HCT116 (cell line): ENCODE measurements at regions of chr12 and their contacts with region 1.

Region 1: GRCh38 chr12:38906482-38907170 is 1.2 kb upstream of the CPNE8 start:
- DNase-seq: peak; percentile 74
- ATAC-seq: peak; percentile 73
- H3K4me3 ChIP-seq: peak overlapping the region; percentile 80 to 83
- H3K27ac ChIP-seq: peak overlapping the region; percentile 95
- H3K4me1 ChIP-seq: peaks cover 7 to 27% of the 10 kb centered on the region in 2 experiments
- H3K27me3 ChIP-seq: no peaks in the 10 kb centered on the region
- CTCF ChIP-seq: peak; percentile 61 to 94 (median 82)
- POLR2A ChIP-seq: no peak
- RAD21 ChIP-seq: peak; percentile 72

Region 2: GRCh38 chr12:38332814-38333213 is 573.8 kb before region 1 on chr12:
- CTCF ChIA-PET with region 1: no interaction called
- POLR2A ChIA-PET with region 1: no interaction called
- RAD21 ChIA-PET with region 1: no interaction called
- intact Hi-C with region 1: loop called (anchors 2 kb)
- DNase-seq: no peak
- ATAC-seq: no peak
- H3K4me3 ChIP-seq: no peak overlapping the region
- H3K27ac ChIP-seq: no peak overlapping the region
- H3K4me1 ChIP-seq: no peaks in the 10 kb centered on the region
- H3K27me3 ChIP-seq: no peaks in the 10 kb centered on the region
- CTCF ChIP-seq: no peak
- POLR2A ChIP-seq: no peak
- RAD21 ChIP-seq: no peak

Region 3: DNA sequence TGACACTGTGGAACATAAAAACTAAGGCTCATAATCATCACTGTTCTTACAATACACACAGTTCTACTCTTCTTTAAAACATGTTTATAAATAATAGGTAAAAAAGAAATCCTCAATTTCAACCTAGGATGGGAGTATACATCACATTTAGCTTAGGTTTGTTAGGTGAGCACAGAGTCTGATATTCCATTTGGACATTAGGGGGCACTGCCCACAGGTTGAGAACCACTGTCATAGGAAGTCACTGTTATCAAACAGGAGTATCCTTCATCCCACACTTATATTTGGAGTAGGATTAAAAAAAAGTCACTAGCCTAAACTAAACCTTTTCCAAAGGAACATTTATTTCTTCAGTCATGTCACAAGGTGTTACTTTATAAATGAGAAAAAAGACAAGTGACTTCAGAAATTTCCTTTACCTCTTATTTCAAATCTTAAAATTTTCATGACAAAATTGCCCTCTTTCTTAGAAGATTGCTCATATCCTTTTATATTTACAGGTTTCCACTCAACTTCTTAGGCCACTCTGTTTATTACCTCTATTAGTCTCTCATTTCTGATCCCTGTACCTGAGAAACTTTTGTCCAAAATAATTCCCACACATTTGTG is 241.9 kb before region 1 on chr12:
- CTCF ChIA-PET with region 1: interaction called, 7 read pairs
- POLR2A ChIA-PET with region 1: no interaction called
- RAD21 ChIA-PET with region 1: no interaction called
- intact Hi-C with region 1: loop called (anchors 5 kb)
- DNase-seq: peak; percentile 15
- ATAC-seq: peak; percentile 88
- H3K4me3 ChIP-seq: no peak overlapping the region
- H3K27ac ChIP-seq: no peak overlapping the region
- H3K4me1 ChIP-seq: no peaks in the 10 kb centered on the region
- H3K27me3 ChIP-seq: no peaks in the 10 kb centered on the region
- CTCF ChIP-seq: peak; percentile 25 to 75 (median 73); a peak in 5 of 6 replicates
- POLR2A ChIP-seq: no peak
- RAD21 ChIP-seq: peak; percentile 56

Region 4: DNA sequence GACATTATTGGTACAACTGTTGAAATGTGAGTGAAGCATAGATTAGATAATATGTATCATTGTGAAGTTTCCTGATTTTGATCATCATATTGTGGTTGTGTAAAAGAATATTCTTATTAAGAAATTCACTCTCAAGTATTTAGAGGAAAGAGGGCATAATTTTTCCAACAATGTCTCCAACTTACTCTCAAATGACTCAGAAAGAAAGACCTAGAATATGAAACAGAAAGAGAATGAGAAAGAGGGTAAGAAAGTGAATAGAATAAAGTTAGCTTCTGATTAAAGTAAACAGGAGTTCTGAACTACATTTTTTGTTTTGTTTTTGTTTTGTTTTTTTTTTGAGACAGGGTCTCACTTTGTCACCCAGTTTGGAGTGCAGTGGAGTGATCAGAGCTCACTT is 124.3 kb before region 1 on chr12:
- CTCF ChIA-PET with region 1: no interaction called
- POLR2A ChIA-PET with region 1: no interaction called
- RAD21 ChIA-PET with region 1: no interaction called
- intact Hi-C with region 1: no loop called
- DNase-seq: no peak
- ATAC-seq: no peak
- H3K4me3 ChIP-seq: no peak overlapping the region
- H3K27ac ChIP-seq: no peak overlapping the region
- H3K4me1 ChIP-seq: no peaks in the 10 kb centered on the region
- H3K27me3 ChIP-seq: no peaks in the 10 kb centered on the region
- CTCF ChIP-seq: no peak
- POLR2A ChIP-seq: no peak
- RAD21 ChIP-seq: no peak

Region 5: DNA sequence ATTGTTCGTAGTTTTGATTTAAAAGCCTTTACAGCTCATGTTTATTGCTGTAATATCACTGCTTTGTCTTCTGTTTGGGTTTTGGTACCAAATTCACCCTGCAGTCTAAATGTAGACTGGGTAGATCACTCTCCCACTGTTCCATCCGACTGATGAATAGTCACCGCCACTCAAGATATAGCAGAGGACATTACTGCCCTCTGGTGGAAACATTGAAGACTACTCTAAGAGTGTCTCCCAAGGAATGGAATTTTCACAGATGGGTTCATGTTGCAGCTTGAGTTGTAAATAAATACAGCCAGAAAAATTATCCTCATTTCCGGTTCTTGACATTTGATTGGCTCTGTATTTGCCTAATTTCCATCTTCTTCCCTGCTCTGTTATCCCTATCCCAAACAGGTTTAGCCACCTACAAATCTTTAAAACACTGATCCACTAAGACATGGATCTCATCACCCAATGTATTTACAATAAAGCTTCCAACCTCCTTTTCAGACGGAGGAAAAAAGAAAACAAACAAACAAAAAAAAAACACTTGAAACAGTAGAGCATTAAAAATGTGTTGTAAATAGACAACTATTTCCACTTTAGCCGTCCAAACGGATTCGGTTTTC is 197.0 kb after region 1 on chr12:
- CTCF ChIA-PET with region 1: interaction called, 27 read pairs
- POLR2A ChIA-PET with region 1: no interaction called
- RAD21 ChIA-PET with region 1: interaction called in 1 of 2 experiments, 6 read pairs
- intact Hi-C with region 1: loop called (anchors 5 kb)
- DNase-seq: peak; percentile 70
- ATAC-seq: peak; percentile 98
- H3K4me3 ChIP-seq: no peak overlapping the region
- H3K27ac ChIP-seq: no peak overlapping the region
- H3K4me1 ChIP-seq: no peaks in the 10 kb centered on the region
- H3K27me3 ChIP-seq: no peaks in the 10 kb centered on the region
- CTCF ChIP-seq: peak; percentile 67 to 85 (median 70)
- POLR2A ChIP-seq: no peak
- RAD21 ChIP-seq: peak; percentile 87